CD4-positive, alpha-beta memory T cell (primary cell): ENCODE measurements at regions of chr16 and their contacts with region 1.

Region 1: DNA sequence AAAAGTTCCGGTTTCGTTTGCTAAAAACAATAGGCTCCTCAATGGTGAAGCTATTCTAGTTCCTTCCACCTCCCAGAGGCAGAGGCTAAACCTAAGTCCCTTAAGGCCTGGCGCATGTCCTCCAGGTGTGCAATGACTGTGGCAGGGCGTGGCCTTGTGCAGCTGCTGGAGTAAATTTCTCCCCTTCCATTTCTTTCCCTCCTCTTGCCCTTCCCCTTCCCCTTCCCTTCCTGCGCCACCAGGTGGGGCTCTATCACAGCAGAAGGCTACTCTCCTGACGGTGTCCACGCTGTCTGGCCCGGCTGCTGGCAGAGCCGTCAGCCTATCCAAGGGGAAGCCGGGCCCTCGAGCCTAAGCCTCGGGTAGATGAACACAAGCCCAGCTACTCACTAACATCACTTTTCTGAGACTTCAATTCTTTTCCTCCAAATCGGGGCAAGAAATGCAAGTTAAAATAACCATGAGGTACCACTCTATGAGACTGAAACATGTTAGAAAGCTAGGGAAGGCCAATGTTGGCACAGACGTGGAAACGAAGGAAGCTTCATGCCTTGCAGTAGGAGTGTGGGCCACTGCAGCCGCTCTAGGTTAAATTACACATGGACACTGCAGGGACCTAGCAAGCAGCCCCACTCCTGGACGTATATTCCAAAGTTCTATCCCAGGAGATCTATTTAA is 34.4 kb downstream of the C16orf78 start:
- DNase-seq: peak; percentile 49 to 52 (median 51)
- H3K4me3 ChIP-seq: no peak overlapping the region
- H3K4me3 Mint-ChIP-seq: peak overlapping the region in 2 of 8 donors; percentile 4 to 44
- H3K27ac ChIP-seq: no peak overlapping the region
- H3K27ac Mint-ChIP-seq: peak overlapping the region in 1 of 7 donors; percentile 82
- H3K4me1 ChIP-seq: no peaks in the 10 kb centered on the region
- H3K4me1 Mint-ChIP-seq: peaks cover 0 to 4% (median 3%) of the 10 kb centered on the region in 4 donors
- H3K27me3 ChIP-seq: no peaks in the 10 kb centered on the region
- H3K27me3 Mint-ChIP-seq: peaks cover 1 to 3% of the 10 kb centered on the region in 2 donors

Region 2: DNA sequence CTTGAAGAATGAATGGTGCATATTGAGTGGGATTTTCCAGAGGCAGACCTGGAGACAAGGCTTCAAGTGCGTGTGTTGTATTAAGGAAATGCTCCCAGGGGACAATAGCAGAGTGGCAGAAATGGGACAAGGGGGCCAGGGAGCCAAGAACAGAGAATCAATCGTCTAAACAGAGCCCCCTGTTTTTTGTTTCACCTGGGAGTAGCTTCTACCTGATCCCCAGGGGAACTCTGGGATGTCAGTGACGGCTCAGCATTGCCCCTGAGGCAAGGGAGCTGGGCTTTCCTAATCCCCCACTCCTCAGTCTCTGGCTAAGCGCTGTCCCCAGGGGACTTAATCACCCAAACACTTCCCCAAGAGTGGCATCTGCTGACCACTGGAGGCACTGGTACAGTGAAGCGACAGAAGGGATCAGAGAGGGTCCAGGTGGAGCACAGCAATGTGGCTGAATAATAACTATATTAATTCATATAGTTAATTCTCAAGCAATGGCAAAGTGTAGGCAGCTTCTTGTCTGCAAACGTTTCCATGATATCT is 70.1 kb before region 1 on chr16:
- CTCF ChIA-PET with region 1: no interaction called
- POLR2A ChIA-PET with region 1: no interaction called
- intact Hi-C with region 1: no loop called
- DNase-seq: no peak
- H3K4me3 ChIP-seq: no peak overlapping the region
- H3K4me3 Mint-ChIP-seq: no peak overlapping the region
- H3K27ac ChIP-seq: no peak overlapping the region
- H3K27ac Mint-ChIP-seq: no peak overlapping the region
- H3K4me1 ChIP-seq: no peaks in the 10 kb centered on the region
- H3K4me1 Mint-ChIP-seq: no peaks in the 10 kb centered on the region
- H3K27me3 ChIP-seq: no peaks in the 10 kb centered on the region
- H3K27me3 Mint-ChIP-seq: peaks cover 4% of the 10 kb centered on the region in 2 donors

Region 3: GRCh38 chr16:49491771-49492761 is 84.1 kb after region 1 on chr16:
- CTCF ChIA-PET with region 1: no interaction called
- POLR2A ChIA-PET with region 1: no interaction called
- intact Hi-C with region 1: loop called (anchors 1 kb)
- DNase-seq: peak in 4 of 5 donors; percentile 10 to 27 (median 16)
- H3K4me3 ChIP-seq: no peak overlapping the region
- H3K4me3 Mint-ChIP-seq: no peak overlapping the region
- H3K27ac ChIP-seq: no peak overlapping the region
- H3K27ac Mint-ChIP-seq: no peak overlapping the region
- H3K4me1 ChIP-seq: peaks cover 9% of the 10 kb centered on the region
- H3K4me1 Mint-ChIP-seq: peaks cover 0 to 4% (median 2%) of the 10 kb centered on the region in 4 donors
- H3K27me3 ChIP-seq: no peaks in the 10 kb centered on the region
- H3K27me3 Mint-ChIP-seq: peaks cover 4% of the 10 kb centered on the region in 2 donors

Region 4: DNA sequence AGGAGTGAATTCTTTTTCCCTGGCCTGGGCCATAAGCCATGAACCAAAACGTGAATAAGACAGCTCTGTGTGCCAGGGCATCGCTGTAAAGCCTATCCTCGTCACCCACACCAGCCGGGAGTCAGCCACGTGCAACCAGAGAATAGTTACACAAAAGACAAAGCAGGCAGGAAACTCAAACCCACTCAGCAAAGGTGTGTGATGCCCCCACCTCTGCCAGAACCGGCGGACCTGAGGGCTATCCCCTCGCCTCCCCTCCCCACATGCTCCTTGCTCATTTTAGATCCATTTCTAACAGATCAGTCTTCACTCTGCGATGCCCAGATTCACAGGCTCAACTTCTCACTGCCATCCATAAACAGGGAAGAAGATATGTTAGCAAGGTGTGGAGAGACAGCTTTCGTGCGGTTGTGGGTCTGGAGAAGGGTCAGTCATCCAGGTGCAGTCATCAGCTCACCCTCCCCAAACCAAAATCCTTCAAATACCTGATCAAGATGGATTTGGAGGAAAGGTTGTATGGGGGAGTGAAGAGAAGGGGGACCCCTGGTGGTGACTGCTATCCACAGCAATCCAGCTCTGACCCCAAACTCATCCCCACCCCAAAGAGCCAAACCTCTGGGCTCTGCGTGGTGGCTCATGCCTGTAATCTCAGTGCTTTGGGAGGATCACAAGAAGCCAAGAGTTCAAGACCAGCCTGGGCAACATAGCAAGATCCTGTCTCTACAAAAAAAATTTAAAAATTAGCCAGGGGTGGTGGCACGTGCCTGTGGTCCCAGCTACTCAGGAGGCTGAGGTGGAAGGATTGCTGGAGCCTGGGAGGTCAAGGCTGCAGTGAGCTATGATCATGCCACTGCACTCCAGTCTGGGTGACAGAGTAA is 184.8 kb after region 1 on chr16:
- CTCF ChIA-PET with region 1: interaction called, 10 read pairs
- POLR2A ChIA-PET with region 1: no interaction called
- intact Hi-C with region 1: loop called (anchors 1 kb)
- DNase-seq: peak in 4 of 5 donors; percentile 26 to 34 (median 32)
- H3K4me3 ChIP-seq: no peak overlapping the region
- H3K4me3 Mint-ChIP-seq: no peak overlapping the region
- H3K27ac ChIP-seq: no peak overlapping the region
- H3K27ac Mint-ChIP-seq: no peak overlapping the region
- H3K4me1 ChIP-seq: no peaks in the 10 kb centered on the region
- H3K4me1 Mint-ChIP-seq: peaks cover 0 to 4% (median 1%) of the 10 kb centered on the region in 4 donors
- H3K27me3 ChIP-seq: no peaks in the 10 kb centered on the region
- H3K27me3 Mint-ChIP-seq: peaks cover 9 to 15% of the 10 kb centered on the region in 2 donors